Left ventricle myocardium superior (tissue), 1 donor: ENCODE measurements at regions of chr1 and their contacts with region 1.

Region 1: DNA sequence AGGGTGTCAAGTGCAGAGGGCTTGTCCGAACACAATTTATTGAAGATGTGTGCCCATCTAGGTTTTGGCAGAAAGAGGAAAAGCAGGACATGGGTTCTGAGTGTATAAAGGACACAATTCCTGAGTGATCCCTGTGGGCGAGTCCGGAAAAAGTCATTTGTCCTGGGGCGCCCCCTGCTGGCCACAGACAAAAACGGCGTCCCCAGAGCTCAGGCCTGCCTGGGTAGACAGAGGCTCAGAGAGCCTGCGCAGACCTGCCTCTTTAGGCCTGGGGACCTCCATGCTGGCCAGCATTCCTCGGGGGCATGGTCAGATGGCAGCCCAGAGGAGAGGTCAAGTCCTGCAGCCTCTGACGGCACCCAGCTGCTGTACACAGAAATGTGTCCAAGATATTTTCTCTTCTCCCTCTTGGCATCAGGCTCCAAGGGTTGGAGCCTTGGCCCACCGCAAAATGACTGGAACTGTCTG is 65.5 kb upstream of the LRP8 start:
- DNase-seq: peak; percentile 82
- ATAC-seq: peak; percentile 88

Region 2: GRCh38 chr1:53278201-53278725 is 115.1 kb before region 1 on chr1:
- intact Hi-C with region 1: loop called (anchors 2 kb)
- DNase-seq: peak; percentile 72
- ATAC-seq: peak; percentile 66